Activated CD4-positive, alpha-beta T cell treated with anti-CD3 and anti-CD28 coated beads for 36 hours (primary cell): ENCODE measurements at regions of chr14 and their contacts with region 1.

Region 1: DNA sequence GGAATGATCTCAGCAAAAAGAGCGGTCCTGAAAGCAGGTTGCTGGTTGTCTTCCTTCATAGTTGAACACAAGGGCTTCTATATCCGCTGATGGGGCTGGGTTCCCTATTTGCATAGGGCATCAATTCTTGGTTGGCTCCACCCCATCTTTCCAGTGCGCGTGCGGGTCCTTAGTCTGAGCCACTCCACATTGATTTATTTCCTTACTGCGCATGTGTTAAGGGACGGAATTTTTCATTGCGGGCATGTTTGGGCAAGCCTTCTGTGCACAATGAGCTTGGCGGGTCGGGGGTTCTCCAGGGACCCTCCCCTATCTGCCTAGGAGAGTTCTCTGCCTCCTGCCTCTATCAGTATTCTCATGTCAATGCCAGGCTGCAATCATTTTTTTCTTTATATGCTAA is 21.2 kb upstream of the DLGAP5 start:
- DNase-seq: no peak
- ATAC-seq: no peak
- H3K4me3 Mint-ChIP-seq: no peak overlapping the region
- H3K27ac Mint-ChIP-seq: no peak overlapping the region
- H3K4me1 Mint-ChIP-seq: peaks cover 4% of the 10 kb centered on the region
- H3K27me3 Mint-ChIP-seq: no peaks in the 10 kb centered on the region

Region 2: GRCh38 chr14:55411426-55412389 is 199.1 kb after region 1 on chr14 and contains the start of gene ATG14:
- CTCF ChIA-PET with region 1: interaction called, 5 read pairs
- POLR2A ChIA-PET with region 1: no interaction called
- intact Hi-C with region 1: loop called in 1 of 2 experiments (anchors 5 kb)
- DNase-seq: peak; percentile 88
- ATAC-seq: peak; percentile 99
- H3K4me3 Mint-ChIP-seq: peak within 1 kb of the TSS; percentile 79
- H3K27ac Mint-ChIP-seq: peak within 1 kb of the TSS; percentile 82
- H3K4me1 Mint-ChIP-seq: peaks cover 27% of the 10 kb centered on the region
- H3K27me3 Mint-ChIP-seq: no peaks in the 10 kb centered on the region
- total RNA-seq, gene ATG14: 5.0 to 5.1 TPM